CD4-positive, alpha-beta memory T cell (primary cell): ENCODE measurements at regions of chr15 and their contacts with region 1.

Region 1: GRCh38 chr15:83066734-83067637 is at the start of gene BTBD1:
- DNase-seq: peak; percentile 72 to 82 (median 78)
- H3K4me3 ChIP-seq: peak within 1 kb of the TSS; percentile 58 to 82
- H3K4me3 Mint-ChIP-seq: peak within 1 kb of the TSS; percentile 78 to 96 (median 86)
- H3K27ac ChIP-seq: peak within 1 kb of the TSS; percentile 78
- H3K27ac Mint-ChIP-seq: peak within 1 kb of the TSS; percentile 58 to 94 (median 84)
- H3K4me1 ChIP-seq: peaks cover 44% of the 10 kb centered on the region
- H3K4me1 Mint-ChIP-seq: peaks cover 6 to 16% (median 13%) of the 10 kb centered on the region in 4 donors
- H3K27me3 ChIP-seq: no peaks in the 10 kb centered on the region
- H3K27me3 Mint-ChIP-seq: no peaks in the 10 kb centered on the region
- total RNA-seq, gene BTBD1: 36.5 to 39.6 TPM

Region 2: DNA sequence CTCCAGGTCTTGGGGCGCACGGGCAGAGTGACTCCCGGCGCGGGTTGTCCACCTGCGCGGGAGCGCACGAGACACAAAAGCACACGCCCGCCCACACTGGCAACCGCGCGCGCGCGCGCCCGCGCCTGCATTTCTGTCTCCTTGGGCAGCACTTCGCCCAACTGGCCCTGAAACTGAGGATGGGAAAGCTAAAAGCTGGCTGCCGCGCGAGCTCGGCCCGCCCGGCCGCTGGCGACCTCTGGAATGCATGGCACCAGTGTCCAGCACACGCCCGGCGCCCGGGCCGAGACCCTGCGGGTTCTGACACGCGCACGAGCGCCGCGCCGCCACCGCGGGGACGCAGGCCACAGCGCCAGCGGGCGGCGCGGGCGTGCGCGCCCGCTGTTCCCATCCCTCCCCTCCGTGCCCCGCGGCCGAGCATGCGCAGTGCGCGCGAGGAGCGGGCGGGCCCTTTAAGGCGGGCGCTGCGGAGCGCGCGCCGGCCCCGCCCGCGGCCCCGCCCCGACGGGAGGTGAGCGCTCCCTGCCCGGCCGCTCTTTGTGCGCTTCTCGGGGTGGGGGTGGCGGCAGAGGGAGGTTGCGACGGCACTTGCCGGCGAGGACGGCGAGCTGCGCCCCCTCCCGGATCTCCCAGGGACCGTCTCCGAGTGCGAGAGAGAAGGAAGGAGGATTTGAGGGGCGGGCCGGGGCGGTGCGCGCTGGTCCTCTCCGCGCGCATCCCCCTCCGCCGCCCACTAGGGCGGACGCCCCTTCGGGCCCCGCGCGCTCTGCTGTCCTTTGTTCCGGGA is 1020.1 kb before region 1 on chr15:
- CTCF ChIA-PET with region 1: no interaction called
- POLR2A ChIA-PET with region 1: interaction called, 3 read pairs
- intact Hi-C with region 1: loop called (anchors 5 kb)
- DNase-seq: peak; percentile 86 to 91 (median 90)
- H3K4me3 ChIP-seq: peak overlapping the region; percentile 69 to 75
- H3K4me3 Mint-ChIP-seq: peak overlapping the region; percentile 86 to 94 (median 91)
- H3K27ac ChIP-seq: peak overlapping the region; percentile 69
- H3K27ac Mint-ChIP-seq: peak overlapping the region; percentile 17 to 98 (median 88)
- H3K4me1 ChIP-seq: peaks cover 19% of the 10 kb centered on the region
- H3K4me1 Mint-ChIP-seq: peaks cover 4 to 24% (median 14%) of the 10 kb centered on the region in 4 donors
- H3K27me3 ChIP-seq: no peaks in the 10 kb centered on the region
- H3K27me3 Mint-ChIP-seq: peaks cover 4 to 9% of the 10 kb centered on the region in 2 donors

Region 3: GRCh38 chr15:82875411-82876003 is 191.5 kb before region 1 on chr15:
- CTCF ChIA-PET with region 1: no interaction called
- POLR2A ChIA-PET with region 1: no interaction called
- intact Hi-C with region 1: no loop called
- DNase-seq: no peak
- H3K4me3 ChIP-seq: no peak overlapping the region
- H3K4me3 Mint-ChIP-seq: no peak overlapping the region
- H3K27ac ChIP-seq: no peak overlapping the region
- H3K27ac Mint-ChIP-seq: no peak overlapping the region
- H3K4me1 ChIP-seq: no peaks in the 10 kb centered on the region
- H3K4me1 Mint-ChIP-seq: no peaks in the 10 kb centered on the region
- H3K27me3 ChIP-seq: peaks cover 5% of the 10 kb centered on the region
- H3K27me3 Mint-ChIP-seq: peaks cover 0 to 2% of the 10 kb centered on the region in 2 donors

Region 4: DNA sequence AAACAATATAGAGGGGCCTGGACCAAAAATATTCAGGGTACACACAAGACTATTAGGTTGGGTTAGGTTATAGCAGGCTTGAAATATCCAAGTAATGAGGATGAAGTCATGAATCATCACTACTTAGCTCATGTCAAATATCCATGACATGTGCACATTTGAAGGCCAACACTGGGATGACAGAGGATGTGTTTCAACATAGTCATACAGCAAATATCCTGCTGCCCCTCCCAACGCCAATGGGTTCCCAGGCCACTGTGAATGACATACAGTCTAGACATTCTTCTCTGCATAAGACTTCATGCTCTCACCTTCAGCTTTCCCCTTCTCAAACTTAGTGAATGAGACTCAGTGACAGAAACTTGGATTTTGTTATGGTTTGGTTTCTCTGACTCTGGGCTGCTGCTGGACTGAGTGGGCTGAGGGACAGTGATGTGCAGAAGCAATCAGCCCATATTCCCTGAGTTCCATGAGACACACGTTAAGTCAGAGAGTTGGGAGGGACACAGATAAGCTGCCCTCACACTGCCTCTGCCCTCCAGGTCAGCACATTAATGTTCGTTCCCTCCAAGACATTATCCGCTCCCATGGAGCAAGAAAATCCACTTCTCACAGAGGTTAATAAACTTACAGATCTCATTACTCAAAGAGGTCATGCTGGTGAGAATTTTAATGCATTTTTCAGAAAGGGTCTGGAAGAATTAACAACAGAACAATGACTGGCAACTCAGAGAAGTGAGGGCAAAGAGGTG is 129.8 kb before region 1 on chr15:
- CTCF ChIA-PET with region 1: no interaction called
- POLR2A ChIA-PET with region 1: no interaction called
- intact Hi-C with region 1: no loop called
- DNase-seq: no peak
- H3K4me3 ChIP-seq: no peak overlapping the region
- H3K4me3 Mint-ChIP-seq: no peak overlapping the region
- H3K27ac ChIP-seq: no peak overlapping the region
- H3K27ac Mint-ChIP-seq: no peak overlapping the region
- H3K4me1 ChIP-seq: no peaks in the 10 kb centered on the region
- H3K4me1 Mint-ChIP-seq: peaks cover 0 to 2% (median 0%) of the 10 kb centered on the region in 4 donors
- H3K27me3 ChIP-seq: no peaks in the 10 kb centered on the region
- H3K27me3 Mint-ChIP-seq: peaks cover 5 to 15% of the 10 kb centered on the region in 2 donors